Posterior vena cava (tissue), 2 donors: ENCODE measurements at regions of chr15 and their contacts with region 1.

Region 1: DNA sequence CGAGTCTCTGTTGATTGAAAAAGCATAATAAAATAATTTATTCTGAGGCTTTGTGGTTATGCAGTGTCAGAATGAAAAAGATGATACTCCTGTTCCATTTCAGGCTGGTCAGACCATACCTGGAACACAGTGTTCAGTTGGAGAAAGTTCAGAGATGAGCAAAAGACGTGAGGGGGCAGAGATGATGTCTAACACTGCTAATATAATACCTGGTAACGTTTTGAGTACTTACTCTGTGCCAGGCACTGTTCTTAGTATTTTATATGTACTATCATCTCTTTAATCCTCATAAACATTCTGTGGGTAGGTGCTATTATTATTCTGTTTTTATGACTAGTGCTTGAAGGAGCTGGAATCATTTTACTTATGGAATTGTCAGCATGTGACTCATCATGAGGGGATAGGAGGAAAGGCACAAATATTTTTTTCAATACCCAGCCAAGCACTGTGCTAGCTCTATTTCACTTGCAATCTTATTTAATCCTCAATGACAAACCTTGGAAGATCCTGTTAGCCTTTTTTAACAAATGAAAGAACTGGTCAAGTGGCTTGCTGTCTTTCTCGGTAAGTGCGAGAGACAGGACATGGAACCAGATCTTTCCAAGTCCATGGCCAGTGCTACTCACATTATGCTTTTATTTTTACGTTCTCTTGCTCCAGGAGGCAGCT is 31.8 kb downstream of the IQGAP1 start:
- DNase-seq: no peak

Region 2: DNA sequence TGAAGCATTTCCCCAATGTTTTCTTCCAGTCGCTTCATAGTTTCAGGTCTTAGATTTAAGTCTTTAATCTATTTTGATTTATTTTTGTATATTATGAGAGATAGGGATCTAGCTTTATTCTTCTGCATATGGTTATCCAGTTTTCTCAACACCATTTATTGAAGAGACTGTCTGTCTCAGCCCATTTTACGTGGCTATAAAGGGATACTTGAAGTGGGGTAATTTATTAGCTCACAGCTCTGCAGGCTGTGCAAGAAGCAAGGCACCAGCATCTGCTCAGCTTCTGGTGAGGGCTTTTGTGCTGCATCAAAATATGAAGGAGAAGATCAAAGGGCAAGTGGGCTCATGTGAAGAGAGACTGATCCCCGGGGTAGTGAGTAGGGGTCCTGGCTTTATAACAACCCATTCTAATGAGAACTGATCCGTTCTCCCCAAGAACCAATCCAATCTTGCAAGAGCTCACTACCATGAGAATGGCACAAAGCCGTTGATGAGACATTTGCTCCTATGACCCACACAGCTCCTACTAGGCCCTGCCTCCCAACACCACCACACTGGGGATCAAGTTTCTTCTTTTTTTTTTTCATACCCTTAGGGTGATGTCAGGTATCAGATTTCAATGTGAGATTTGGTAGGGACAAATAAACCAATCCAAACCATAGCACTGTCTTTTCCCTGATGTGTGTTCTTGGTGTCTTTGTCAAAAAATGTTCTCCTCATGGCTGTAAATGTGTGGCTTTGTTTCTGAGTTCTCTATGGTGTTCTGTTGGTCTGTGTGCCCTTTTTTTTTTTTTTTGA is 31.4 kb after region 1 on chr15:
- intact Hi-C with region 1: loop called in 1 of 2 experiments (anchors 5 kb)
- DNase-seq: no peak

Region 3: GRCh38 chr15:90471769-90472168 is 51.9 kb after region 1 on chr15:
- intact Hi-C with region 1: no loop called
- DNase-seq: no peak